Psoas muscle (tissue), 8 donors: ENCODE measurements at regions of chr17 and their contacts with region 1.

Region 1: DNA sequence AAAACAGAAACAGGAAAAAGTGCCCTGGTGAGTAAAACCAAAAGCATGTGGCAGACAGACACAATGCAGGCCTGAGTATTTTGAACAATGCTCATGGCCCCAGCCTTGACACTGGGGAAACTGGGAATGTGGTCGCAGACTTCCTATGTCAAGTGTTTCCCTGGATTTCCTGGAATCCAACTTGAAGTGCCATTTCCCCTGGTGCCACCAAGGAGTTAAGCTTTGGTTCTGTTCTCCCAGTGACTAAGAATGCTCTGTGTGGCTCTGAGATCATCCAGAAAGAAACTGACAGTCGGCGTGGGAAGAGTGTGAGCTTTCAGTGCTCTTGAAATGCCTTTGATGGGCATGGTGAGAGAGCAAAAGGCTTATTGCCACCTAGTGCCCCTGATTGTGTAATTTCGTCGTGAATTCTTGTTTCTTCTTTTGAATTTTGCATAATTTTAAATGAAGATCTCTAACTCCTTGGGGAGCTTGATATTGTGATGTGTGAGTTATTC is 96.0 kb downstream of the YPEL2 start:
- DNase-seq: no peak
- ATAC-seq: peak; percentile 26 to 48 (median 36)
- H3K4me3 ChIP-seq: no peak overlapping the region
- H3K27ac ChIP-seq: peak overlapping the region; percentile 96
- H3K4me1 ChIP-seq: peaks cover 81% of the 10 kb centered on the region
- H3K27me3 ChIP-seq: no peaks in the 10 kb centered on the region
- CTCF ChIP-seq: no peak

Region 2: GRCh38 chr17:59372138-59372857 is 55.2 kb before region 1 on chr17:
- intact Hi-C with region 1: loop called (anchors 1 to 5 kb)
- DNase-seq: peak in 1 of 2 donors; percentile 41
- ATAC-seq: peak; percentile 71 to 76 (median 74)
- H3K4me3 ChIP-seq: peak overlapping the region; percentile 50
- H3K27ac ChIP-seq: peak overlapping the region; percentile 92
- H3K4me1 ChIP-seq: peaks cover 97% of the 10 kb centered on the region
- H3K27me3 ChIP-seq: no peaks in the 10 kb centered on the region
- CTCF ChIP-seq: no peak

Region 3: GRCh38 chr17:59387351-59388068 is 40.0 kb before region 1 on chr17:
- intact Hi-C with region 1: loop called in 1 of 2 experiments (anchors 5 kb)
- DNase-seq: peak in 1 of 2 donors; percentile 73
- ATAC-seq: peak; percentile 78 to 93 (median 86)
- H3K4me3 ChIP-seq: peak overlapping the region; percentile 39
- H3K27ac ChIP-seq: peak overlapping the region; percentile 87
- H3K4me1 ChIP-seq: peaks cover 33% of the 10 kb centered on the region
- H3K27me3 ChIP-seq: no peaks in the 10 kb centered on the region
- CTCF ChIP-seq: no peak